Common myeloid progenitor, CD34-positive (primary cell): ENCODE measurements at regions of chr17 and their contacts with region 1.

Region 1: DNA sequence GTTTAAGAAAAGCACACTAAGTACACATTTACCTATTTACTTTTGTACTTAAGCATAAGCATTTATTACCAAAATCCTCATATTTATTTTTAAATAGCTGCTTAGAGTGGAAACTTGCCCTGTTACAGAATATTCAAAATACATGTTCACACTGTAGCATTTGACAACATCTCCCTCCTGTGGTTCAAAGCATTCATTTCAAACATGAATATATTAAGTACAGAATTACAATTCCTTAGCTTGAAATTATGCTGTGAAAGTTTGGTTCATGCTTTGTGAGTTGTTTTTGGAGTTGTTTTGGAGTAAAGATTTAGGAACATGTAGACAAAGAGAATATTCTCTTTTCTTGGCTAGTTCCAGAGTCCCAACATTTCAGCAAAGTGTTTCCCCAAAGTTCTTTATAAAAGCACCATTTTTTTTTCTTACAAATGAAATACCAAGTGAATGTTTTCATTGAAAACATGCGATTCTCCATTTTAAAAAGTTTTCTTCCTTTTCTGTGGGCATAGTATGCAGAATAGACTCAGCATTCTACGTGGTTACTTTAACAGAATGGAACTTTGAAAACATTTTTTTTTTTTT is 33.2 kb downstream of the TUBD1 start:
- DNase-seq: peak; percentile 65 to 84 (median 82)
- H3K4me3 ChIP-seq: no peak overlapping the region
- H3K27ac ChIP-seq: no peak overlapping the region
- H3K4me1 ChIP-seq: peaks cover 3 to 10% (median 4%) of the 10 kb centered on the region in 4 experiments
- H3K27me3 ChIP-seq: no peaks in the 10 kb centered on the region

Region 2: DNA sequence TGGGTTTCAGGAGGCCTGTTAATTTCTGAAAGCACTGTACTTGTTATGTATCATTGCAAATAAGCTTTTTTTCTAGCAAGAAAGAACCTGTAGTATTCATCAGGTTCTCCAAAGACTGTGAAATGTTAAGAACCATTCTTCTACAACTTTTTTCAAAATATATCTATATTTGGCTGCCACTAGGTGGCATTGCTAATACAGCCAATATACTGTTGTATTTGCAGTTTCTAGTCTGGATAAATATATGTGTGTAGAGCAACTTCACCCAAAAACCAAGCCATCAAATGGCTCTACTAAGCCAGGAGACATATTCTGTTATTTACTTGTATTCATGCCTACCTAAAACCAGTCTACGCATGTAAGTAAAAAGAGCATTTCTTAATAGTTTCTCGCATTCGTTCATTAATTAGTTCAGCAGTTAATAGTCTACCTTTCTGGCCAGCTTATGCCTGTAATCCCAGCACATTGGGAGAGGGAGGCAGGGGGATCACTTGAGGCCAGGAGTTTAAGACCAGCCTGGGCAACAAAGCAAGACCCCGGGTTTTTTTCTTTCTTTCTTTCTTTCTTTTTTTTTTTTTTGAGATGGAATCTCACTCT is 112.6 kb before region 1 on chr17:
- CTCF ChIA-PET with region 1: interaction called, 13 read pairs
- POLR2A ChIA-PET with region 1: no interaction called
- DNase-seq: peak; percentile 40 to 76 (median 65)
- H3K4me3 ChIP-seq: no peak overlapping the region
- H3K27ac ChIP-seq: no peak overlapping the region
- H3K4me1 ChIP-seq: no peaks in the 10 kb centered on the region
- H3K27me3 ChIP-seq: no peaks in the 10 kb centered on the region

Region 3: DNA sequence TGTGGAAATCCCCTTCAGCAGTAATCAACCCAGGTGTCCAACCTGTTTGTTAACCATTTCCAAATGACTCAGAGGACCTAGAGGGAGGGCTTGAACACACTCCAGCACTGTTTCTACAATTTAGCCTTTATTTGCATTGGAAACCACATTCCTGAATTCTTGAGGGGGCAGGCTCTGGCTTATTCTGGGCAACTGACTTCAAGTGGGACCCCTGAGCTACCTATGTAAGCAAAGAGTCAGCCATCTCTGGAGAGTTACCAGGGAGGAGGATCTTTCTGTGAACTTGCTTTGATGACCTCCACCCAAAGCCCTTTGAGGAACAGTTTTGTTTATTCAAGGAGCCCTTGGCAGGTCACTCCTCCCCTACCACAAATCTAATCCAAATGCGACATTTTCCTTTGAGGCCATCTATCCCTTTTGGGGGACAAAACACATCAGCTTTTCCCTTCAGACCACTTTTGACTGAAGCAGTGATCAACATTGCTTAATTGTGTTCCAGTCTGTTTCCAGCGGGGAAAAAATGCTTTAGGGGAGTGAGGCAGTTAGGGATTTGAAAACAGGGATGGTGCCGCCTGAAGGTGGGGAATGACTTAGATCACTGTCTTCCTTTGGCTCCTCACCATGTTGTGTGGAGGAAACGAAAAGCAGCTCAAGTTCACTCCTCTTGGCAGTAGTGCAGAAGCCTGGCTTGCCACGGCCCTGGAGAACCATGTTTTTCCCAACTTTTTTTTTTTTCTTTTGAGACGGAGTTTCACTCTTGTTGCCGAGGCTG is 13.0 kb before region 1 on chr17:
- CTCF ChIA-PET with region 1: interaction called, 12 read pairs
- POLR2A ChIA-PET with region 1: no interaction called
- DNase-seq: peak in 2 of 3 donors; percentile 89 to 92
- H3K4me3 ChIP-seq: no peak overlapping the region
- H3K27ac ChIP-seq: peak overlapping the region; percentile 65 to 80
- H3K4me1 ChIP-seq: peaks cover 8 to 50% (median 27%) of the 10 kb centered on the region in 4 experiments
- H3K27me3 ChIP-seq: no peaks in the 10 kb centered on the region

Region 4: DNA sequence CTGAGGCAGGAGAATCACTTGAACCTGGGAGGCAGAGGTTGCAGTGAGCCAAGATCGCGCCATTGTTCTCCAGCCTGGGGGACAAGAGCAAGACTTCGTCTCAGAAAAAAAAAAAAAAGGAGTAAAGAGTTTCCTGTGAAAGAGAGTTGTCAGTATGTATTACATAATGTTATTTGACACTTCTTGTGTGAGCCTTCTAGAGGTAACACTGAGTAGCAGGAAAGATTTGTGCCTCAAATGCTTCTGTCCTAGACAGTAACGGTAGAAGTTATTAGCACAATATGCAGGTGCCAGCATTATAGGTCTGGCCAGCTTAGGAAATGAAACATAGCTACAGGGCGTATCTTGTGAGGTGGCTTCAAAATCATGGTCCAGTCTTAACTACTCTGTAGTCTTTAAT is 39.6 kb after region 1 on chr17:
- CTCF ChIA-PET with region 1: no interaction called
- POLR2A ChIA-PET with region 1: no interaction called
- DNase-seq: no peak
- H3K4me3 ChIP-seq: no peak overlapping the region
- H3K27ac ChIP-seq: no peak overlapping the region
- H3K4me1 ChIP-seq: peaks cover 2 to 8% (median 7%) of the 10 kb centered on the region in 4 experiments
- H3K27me3 ChIP-seq: no peaks in the 10 kb centered on the region